ENCODE measurements at regions of chrX and their contacts with region 1.

Region 1: DNA sequence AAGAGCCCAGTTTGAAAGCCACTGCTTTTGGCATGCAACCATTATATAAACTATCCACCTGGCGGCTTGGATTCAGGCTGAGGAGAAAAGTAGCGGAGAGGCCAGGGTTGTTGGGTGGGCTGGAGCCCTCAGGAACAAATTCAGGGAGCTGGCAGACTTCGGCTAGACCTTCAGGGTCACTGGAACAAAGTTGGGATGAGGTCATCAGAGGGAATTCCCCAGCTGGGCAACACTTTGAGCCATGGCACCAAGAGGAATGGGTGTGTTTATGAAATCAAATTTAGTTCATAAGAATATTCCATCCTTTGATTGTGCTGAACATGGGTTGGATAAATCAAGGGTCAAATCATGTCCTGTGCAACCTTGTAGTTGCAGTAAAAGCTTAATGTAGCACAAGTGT is 22.0 kb downstream of the MTMR1 start:
- DNase-seq: no peak
- H3K4me3 ChIP-seq: no peak overlapping the region
- H3K27ac ChIP-seq: no peak overlapping the region
- H3K4me1 ChIP-seq: peaks cover 0 to 8% (median 0%) of the 10 kb centered on the region in 4 donors
- H3K27me3 ChIP-seq: no peaks in the 10 kb centered on the region
- CTCF ChIP-seq: no peak
- EP300 ChIP-seq: no peak
- POLR2A ChIP-seq: no peak

Region 2: GRCh38 chrX:149939796-149940673 is 775.1 kb before region 1 on chrX:
- intact Hi-C with region 1: loop called (anchors 10 kb)
- DNase-seq: peak; percentile 99
- H3K4me3 ChIP-seq: peak overlapping the region; percentile 49 to 78 (median 58)
- H3K27ac ChIP-seq: peak overlapping the region; percentile 88 to 93 (median 90)
- H3K4me1 ChIP-seq: peaks cover 0 to 7% (median 5%) of the 10 kb centered on the region in 4 donors
- H3K27me3 ChIP-seq: no peaks in the 10 kb centered on the region
- CTCF ChIP-seq: no peak
- EP300 ChIP-seq: no peak
- POLR2A ChIP-seq: no peak

Region 3: GRCh38 chrX:150476181-150476699 is 238.9 kb before region 1 on chrX:
- intact Hi-C with region 1: no loop called
- DNase-seq: no peak
- H3K4me3 ChIP-seq: no peak overlapping the region
- H3K27ac ChIP-seq: no peak overlapping the region
- H3K4me1 ChIP-seq: peaks cover 0 to 7% (median 3%) of the 10 kb centered on the region in 4 donors
- H3K27me3 ChIP-seq: no peaks in the 10 kb centered on the region
- CTCF ChIP-seq: no peak
- EP300 ChIP-seq: no peak
- POLR2A ChIP-seq: no peak

Region 4: DNA sequence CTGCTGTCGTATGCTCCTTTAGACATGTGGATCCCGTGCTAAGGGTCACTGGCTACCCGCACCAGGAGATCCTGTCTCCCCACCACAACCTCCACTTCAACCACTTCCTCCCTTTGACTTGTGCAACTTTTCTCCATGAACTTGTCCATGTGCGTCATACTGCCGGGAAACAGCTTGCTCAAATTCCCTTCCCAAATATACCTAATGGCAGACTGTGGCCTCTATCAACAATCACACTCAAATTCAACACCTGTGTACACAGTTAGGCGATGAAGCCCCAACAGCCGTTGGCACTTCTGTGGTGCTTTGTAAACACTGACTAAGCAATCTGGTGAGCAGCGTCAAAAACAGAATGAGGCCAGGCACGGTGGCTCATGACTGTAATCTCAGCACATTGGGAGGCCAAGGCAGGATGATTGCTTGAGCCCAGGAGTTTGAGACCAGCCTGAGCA is 133.8 kb after region 1 on chrX:
- intact Hi-C with region 1: no loop called
- DNase-seq: no peak
- H3K4me3 ChIP-seq: no peak overlapping the region
- H3K27ac ChIP-seq: no peak overlapping the region
- H3K4me1 ChIP-seq: no peaks in the 10 kb centered on the region
- H3K27me3 ChIP-seq: no peaks in the 10 kb centered on the region
- CTCF ChIP-seq: no peak
- EP300 ChIP-seq: no peak
- POLR2A ChIP-seq: no peak